OCI-LY7 (cell line): ENCODE measurements at regions of chr3 and their contacts with region 1.

Region 1: DNA sequence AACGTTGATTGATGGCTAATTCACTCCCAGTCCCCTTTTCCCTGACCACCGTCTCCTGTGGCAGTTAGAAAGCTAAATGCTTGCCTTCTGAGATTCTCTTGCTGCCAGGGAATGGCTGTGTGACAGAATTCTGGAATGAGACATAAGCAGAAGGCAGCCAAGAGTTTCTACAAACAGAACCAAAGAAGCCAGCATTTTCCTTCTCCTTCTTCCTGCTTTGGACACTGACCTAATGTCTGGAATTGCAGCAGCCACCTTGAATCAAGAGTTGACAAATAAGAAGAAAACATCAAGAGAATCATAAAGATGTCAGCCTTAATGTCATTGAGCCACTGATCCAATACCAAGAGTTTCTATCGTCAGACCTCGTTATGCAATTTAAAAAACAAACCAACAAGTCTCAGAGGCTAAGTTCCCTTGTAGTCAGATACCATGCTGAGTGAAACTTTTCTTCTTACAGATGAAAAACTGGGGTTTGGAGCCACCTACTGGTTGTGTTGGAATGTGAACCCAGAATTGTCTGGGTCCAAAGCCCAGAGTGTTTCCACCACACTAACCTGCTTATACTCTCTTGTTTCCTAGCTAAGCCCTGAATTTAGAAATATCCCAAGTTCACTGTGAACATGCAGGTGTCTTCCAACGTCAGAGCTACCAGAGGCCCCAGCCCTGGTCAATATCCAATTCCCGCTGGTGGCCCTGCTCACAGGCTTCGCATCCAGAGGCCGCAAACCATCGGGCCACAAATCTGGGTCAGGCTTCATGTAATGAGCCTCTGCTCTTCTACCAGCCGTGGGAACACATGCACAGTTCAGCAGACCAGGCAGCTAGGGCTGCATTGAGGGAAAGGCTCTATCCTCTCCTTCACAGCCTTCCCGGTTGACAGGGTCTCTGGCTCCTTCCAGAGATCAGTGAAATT is 42.5 kb downstream of the MCF2L2 start:
- DNase-seq: peak; percentile 79
- H3K4me3 ChIP-seq: no peak overlapping the region
- H3K27ac ChIP-seq: no peak overlapping the region
- H3K4me1 ChIP-seq: peaks cover 14% of the 10 kb centered on the region
- CTCF ChIP-seq: peak; percentile 93

Region 2: GRCh38 chr3:182294256-182294655 is 1091.7 kb before region 1 on chr3:
- CTCF ChIA-PET with region 1: no interaction called
- POLR2A ChIA-PET with region 1: no interaction called
- intact Hi-C with region 1: no loop called
- DNase-seq: no peak
- H3K4me3 ChIP-seq: no peak overlapping the region
- H3K27ac ChIP-seq: no peak overlapping the region
- H3K4me1 ChIP-seq: no peaks in the 10 kb centered on the region
- CTCF ChIP-seq: no peak

Region 3: DNA sequence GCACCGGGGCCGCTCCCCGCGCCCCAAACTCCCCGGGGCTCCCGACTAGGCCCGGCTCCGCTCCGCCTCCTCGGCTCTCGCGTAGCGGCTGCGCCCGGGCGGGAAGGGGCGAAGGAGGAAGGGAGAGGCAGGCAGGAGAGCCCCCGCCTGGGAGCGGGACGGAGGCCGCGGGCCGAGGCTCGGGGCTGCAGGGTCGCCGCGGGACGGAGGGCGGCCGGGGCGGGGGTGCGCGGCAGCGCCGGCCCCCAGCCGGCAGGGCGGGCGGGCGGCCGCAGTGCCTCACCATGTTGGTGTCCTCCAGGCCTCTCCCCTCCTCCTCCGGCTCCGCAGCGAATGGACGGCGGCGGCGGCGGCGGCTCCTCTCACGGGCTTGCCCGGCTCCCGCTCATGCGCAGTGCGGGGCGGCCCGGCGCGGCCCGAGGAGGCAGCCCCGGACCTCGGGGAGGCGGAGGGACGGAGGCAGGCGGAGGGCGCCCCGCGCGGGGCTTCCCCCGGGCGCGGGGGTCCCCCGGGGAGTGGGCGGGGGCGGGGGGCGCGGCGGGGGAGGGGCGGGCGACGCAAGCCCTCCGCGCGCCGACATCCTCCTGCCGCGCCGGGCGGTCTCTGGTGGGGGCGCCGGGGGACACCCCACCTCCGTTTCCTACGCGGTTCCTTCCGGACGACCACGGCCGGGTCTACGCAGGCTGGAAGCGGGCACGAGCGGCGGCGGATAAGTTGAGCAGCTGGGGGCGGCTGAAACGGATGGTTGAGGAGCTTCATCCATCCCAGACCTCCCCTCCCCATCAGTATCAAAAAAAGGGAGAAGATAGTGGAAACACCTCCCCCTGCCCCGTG is 405.5 kb before region 1 on chr3 and contains the start of gene DCUN1D1:
- CTCF ChIA-PET with region 1: no interaction called
- POLR2A ChIA-PET with region 1: no interaction called
- intact Hi-C with region 1: no loop called
- DNase-seq: peak; percentile 85
- H3K4me3 ChIP-seq: peak within 1 kb of the TSS; percentile 91
- H3K27ac ChIP-seq: peak within 1 kb of the TSS; percentile 50
- H3K4me1 ChIP-seq: peaks cover 37% of the 10 kb centered on the region
- CTCF ChIP-seq: no peak
- total RNA-seq, gene DCUN1D1: 12.7 and 19.4 TPM in 2 replicates

Region 4: DNA sequence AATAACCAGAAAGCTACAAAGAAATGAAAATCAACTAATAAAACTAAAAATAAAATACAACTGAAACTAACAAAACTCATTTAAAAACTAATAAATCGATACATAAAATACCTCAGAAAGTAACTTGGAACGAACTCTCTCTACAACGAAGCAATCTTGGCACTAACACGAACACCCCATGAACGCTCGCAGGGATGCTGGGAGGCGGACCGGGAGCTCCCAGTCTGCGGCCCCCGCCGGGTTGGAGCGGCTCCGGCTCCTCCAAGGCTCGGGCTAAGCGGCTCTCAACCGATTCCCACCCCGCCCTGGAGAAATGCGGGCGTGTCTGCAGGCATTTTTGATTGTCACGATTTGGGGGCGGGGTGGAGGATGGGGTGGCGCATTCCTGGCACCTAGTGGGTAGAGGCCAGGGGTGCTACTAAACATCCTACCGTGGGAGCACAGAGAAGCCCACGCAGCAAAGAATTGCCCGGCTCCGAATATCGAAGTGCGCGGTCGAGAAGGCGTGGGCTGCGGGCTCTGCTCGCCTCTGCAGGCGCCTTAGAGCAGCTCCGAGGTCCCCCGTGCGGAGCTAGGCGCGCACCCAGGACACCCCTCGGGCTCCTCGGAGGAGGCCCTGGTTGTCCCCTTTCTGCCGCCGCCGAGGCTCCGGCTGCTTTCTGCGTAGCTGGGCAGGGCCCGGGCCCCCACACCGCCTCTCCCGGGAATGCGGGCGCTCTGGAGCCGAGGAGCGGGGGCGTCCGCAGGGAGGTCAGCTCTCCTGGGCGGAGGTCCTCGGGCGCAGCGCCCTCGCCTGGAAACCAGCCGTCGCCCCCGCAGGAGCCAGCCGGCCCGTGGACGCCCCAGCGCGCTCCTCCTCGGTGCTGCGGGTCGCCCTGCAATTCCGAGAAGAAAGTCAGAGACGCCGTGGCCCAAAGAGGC is 207.1 kb before region 1 on chr3:
- CTCF ChIA-PET with region 1: no interaction called
- POLR2A ChIA-PET with region 1: no interaction called
- intact Hi-C with region 1: loop called (anchors 1 kb)
- DNase-seq: no peak
- H3K4me3 ChIP-seq: no peak overlapping the region
- H3K27ac ChIP-seq: no peak overlapping the region
- H3K4me1 ChIP-seq: no peaks in the 10 kb centered on the region
- CTCF ChIP-seq: no peak